ENCODE measurements at regions of chr19 and their contacts with region 1.

Region 1: DNA sequence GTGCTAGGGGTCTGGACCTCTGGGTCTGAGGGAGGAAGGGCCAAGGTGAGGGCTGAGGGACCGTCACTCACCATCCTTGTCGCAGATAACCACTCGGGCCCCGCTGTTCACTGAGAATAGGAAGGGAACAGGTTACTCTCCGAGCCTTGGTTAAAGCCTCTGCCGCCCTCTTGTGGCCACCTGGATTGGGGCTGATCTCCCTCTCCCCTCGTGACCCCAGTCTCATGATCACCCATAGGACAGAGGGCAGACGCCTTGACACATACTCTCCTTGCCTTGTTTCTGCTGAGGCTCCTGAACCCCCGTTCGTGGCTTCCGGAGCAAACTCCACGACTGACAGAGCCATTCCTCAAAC is 580 bp downstream of the HSD17B14 start:
- DNase-seq: peak; percentile 96 to 97
- H3K4me3 ChIP-seq: peak overlapping the region; percentile 30 to 46
- H3K27ac ChIP-seq: peak overlapping the region; percentile 86 to 96
- H3K4me1 ChIP-seq: no peaks in the 10 kb centered on the region
- H3K27me3 ChIP-seq: no peaks in the 10 kb centered on the region
- CTCF ChIP-seq: peak; percentile 93 to 98 (median 96)
- POLR2A ChIP-seq: peak; percentile 47 to 74

Region 2: DNA sequence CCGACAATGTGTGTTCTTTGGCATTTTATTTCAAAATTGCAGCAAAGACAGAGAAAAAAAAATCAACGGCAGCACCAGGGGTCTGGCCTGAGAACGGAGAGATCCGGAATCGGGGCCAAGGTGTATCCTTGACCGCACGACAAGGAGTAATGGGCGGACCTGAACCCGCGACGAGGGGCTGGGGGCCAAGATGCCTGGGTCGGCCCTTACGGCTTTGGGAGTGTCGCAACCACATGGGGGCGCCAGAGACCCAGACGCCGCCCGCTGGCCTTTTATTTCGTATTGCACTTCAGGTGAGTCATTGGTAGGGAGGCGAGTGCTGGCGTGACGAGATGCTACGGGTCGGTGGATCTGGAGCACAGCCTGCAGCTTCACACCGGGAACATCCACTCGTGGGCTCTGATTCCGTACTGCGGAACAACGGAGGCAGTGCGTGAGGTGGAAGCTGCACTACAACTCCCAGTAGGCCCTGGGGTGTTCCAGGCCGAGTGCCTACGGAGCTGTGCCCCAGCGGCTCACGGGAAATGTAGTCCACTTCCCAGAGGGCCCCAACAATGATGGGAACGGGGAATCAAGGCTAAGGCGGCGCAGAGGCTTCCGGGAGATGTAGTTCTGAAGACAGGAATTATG is 40.5 kb before region 1 on chr19:
- intact Hi-C with region 1: loop called (anchors 2 kb)
- DNase-seq: peak; percentile 90 to 93
- H3K4me3 ChIP-seq: peak overlapping the region; percentile 22 to 26
- H3K27ac ChIP-seq: peak overlapping the region; percentile 91 to 96
- H3K4me1 ChIP-seq: peaks cover 0 to 11% of the 10 kb centered on the region in 2 donors
- H3K27me3 ChIP-seq: no peaks in the 10 kb centered on the region
- CTCF ChIP-seq: peak; percentile 95 to 98 (median 97)
- POLR2A ChIP-seq: peak in 1 of 2 donors; percentile 46